Activated CD8-positive, alpha-beta T cell treated with anti-CD3 and anti-CD28 coated beads, Interleukin-2, amount 10 ng/mL, durations not matched to agents 7 days and 5 days (primary cell): ENCODE measurements at regions of chr1 and their contacts with region 1.

Region 1: DNA sequence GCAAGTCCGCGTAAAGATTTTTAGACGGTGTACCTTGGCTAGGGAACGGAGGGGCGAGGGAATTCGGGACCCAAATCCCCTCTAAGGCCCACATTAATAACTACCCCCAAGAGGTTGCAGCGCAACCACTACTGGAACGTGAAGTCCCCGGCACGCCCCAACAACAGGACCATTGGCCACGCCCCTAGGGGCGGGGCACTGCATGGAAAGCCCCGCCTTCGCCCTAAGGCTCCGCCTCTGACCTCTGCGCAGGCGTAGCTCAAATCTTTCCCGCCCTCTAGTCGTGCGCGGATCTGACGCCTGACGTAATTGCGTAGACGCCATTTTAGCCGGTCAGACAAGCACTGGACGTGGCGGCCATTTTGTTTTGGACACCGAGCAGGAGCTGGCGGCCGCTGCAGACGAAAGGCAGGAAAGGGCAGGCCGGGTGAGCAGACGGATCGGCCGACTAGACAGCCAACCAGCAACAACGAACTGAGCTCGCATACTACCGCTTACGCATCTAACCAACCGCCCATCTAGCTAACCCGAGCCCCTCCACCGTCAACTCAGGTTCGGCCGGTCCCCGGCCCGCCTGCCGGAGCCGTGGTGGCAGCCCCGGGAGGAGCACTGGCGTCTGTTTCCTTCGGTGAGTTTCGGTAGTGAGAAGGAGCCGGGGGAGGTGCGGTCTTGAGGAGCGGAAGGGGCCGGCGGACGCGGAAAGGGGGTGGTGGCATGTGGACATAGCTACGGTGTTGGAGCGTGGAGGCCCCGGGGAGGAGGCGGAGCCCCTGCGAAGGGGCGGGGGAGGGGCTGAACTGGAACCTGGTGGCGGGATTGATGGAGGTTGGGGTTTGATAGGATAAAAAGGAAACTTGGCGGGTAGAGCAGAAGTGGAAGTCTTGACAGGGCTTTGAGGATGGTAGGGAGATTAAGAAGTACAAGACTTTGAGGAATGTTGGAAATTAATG is at the start of gene CHTOP:
- DNase-seq: peak; percentile 98
- ATAC-seq: peak; percentile 94
- H3K4me3 Mint-ChIP-seq: peak within 1 kb of the TSS; percentile 99
- H3K27ac Mint-ChIP-seq: peak within 1 kb of the TSS; percentile 100
- H3K4me1 Mint-ChIP-seq: peaks cover 39% of the 10 kb centered on the region
- H3K27me3 Mint-ChIP-seq: no peaks in the 10 kb centered on the region
- total RNA-seq, gene CHTOP: 81.9 to 82.0 TPM

Region 2: GRCh38 chr1:153261281-153262069 is 372.5 kb before region 1 on chr1:
- CTCF ChIA-PET with region 1: no interaction called
- POLR2A ChIA-PET with region 1: no interaction called
- DNase-seq: no peak
- ATAC-seq: peak; percentile 23
- H3K4me3 Mint-ChIP-seq: peak overlapping the region; percentile 23
- H3K27ac Mint-ChIP-seq: no peak overlapping the region
- H3K4me1 Mint-ChIP-seq: peaks cover 14% of the 10 kb centered on the region
- H3K27me3 Mint-ChIP-seq: peaks cover 67% of the 10 kb centered on the region

Region 3: GRCh38 chr1:153545067-153546055 is 88.6 kb before region 1 on chr1 and contains the start of gene S100A4:
- CTCF ChIA-PET with region 1: interaction called, 4 read pairs
- POLR2A ChIA-PET with region 1: interaction called, 30 read pairs
- DNase-seq: peak; percentile 95
- ATAC-seq: peak; percentile 84
- H3K4me3 Mint-ChIP-seq: peak within 1 kb of the TSS; percentile 93
- H3K27ac Mint-ChIP-seq: peak within 1 kb of the TSS; percentile 97
- H3K4me1 Mint-ChIP-seq: peaks cover 83% of the 10 kb centered on the region
- H3K27me3 Mint-ChIP-seq: peaks cover 3% of the 10 kb centered on the region
- total RNA-seq, gene S100A4: 628 to 665 TPM

Region 4: GRCh38 chr1:153649863-153650235 is 15.9 kb after region 1 on chr1:
- CTCF ChIA-PET with region 1: interaction called, 13 read pairs
- POLR2A ChIA-PET with region 1: interaction called, 33 read pairs
- DNase-seq: no peak
- ATAC-seq: peak; percentile 31
- H3K4me3 Mint-ChIP-seq: no peak overlapping the region
- H3K27ac Mint-ChIP-seq: peak overlapping the region; percentile 84
- H3K4me1 Mint-ChIP-seq: peaks cover 45% of the 10 kb centered on the region
- H3K27me3 Mint-ChIP-seq: no peaks in the 10 kb centered on the region

Region 5: DNA sequence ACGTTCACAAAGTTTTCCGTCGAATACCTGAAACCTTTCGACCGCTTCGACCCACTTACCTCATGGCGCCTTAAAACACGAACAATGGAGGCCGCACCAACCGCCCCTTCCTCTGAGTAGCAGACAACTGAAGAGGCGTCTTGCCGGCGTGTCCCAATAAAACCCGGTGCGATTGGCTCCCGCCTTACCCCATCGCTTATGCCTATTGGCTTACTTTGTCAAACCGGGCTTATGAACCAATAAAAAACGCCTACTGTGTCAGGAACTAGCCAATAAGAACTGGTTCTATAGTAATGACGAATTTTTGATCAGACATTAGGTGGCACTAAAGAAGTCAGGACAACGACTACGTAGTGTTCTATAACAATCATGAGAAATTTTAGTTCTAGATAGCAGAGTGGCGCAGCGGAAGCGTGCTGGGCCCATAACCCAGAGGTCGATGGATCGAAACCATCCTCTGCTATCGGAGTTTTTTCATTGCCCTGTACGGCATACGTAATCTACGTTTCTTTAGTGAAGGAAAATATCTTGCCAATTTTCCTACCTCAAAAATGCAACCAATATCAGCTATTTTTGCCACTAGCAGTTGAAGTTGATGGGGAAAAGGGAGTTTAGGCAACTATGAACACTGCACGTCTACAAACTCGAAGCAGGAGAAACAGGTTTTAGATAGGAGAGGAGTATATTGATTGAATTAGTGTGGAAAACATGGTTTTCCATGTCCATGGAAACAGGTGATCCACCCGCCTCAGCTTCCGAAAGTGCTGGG is 37.1 kb after region 1 on chr1 and contains the start of gene ILF2:
- CTCF ChIA-PET with region 1: interaction called, 6 read pairs
- POLR2A ChIA-PET with region 1: interaction called, 17 read pairs
- DNase-seq: peak; percentile 99
- ATAC-seq: peak; percentile 93
- H3K4me3 Mint-ChIP-seq: no peak within 1 kb of the TSS
- H3K27ac Mint-ChIP-seq: no peak within 1 kb of the TSS
- H3K4me1 Mint-ChIP-seq: peaks cover 33% of the 10 kb centered on the region
- H3K27me3 Mint-ChIP-seq: no peaks in the 10 kb centered on the region
- total RNA-seq, gene ILF2: 211 to 215 TPM

Region 6: DNA sequence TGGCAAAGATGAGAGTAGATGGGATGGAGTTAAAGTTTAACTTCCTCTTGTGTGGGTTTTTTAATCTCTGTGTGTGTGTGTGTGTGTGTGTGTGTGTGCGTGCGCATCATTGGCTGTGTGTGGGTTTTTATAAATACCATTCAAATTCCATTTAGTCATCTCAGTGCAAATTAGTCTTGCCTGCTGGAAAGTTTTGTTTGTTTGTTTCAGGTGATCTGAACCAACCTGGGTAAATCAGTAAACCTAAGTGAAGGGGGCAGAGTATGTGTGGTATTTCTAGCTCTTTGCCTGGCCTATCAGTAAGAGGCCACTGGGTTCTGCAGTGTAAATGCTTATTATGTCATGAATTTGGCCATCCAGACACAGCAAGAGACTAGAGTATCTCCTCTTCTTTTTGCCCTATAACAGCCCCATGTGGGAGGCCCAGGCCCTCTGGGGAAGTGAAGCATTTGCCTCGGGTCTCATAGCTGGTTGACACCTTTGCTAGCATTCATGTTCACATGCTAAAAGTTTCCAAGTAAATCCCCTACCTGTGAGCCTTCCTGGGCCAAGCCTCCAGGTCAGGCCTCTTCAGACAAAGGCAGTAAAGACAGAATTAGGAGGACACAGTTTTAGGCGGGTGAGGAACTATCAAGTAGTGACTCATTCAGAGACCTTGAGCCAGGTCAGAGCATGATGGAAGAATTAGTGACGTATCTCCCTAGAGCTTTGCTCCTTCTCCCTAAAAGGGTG is 108.6 kb after region 1 on chr1:
- CTCF ChIA-PET with region 1: no interaction called
- POLR2A ChIA-PET with region 1: no interaction called
- DNase-seq: no peak
- ATAC-seq: no peak
- H3K4me3 Mint-ChIP-seq: no peak overlapping the region
- H3K27ac Mint-ChIP-seq: peak overlapping the region; percentile 20
- H3K4me1 Mint-ChIP-seq: peaks cover 11% of the 10 kb centered on the region
- H3K27me3 Mint-ChIP-seq: no peaks in the 10 kb centered on the region